ENCODE measurements at regions of chr17 and their contacts with region 1.

Region 1: GRCh38 chr17:75271233-75271954 is 363 bp upstream of the MIF4GD start:
- DNase-seq: peak; percentile 100
- H3K4me3 ChIP-seq: peak overlapping the region; percentile 74 to 79
- H3K27ac ChIP-seq: peak overlapping the region; percentile 51 to 97; a peak in 3 of 4 replicates
- H3K4me1 ChIP-seq: peaks cover 24 to 44% of the 10 kb centered on the region in 2 experiments; a peak in 3 of 4 replicates
- H3K27me3 ChIP-seq: no peaks in the 10 kb centered on the region
- CTCF ChIP-seq: peak; percentile 62
- EP300 ChIP-seq: no peak
- RAD21 ChIP-seq: peak; percentile 17; the same call in 1 of the 2 replicates

Region 2: DNA sequence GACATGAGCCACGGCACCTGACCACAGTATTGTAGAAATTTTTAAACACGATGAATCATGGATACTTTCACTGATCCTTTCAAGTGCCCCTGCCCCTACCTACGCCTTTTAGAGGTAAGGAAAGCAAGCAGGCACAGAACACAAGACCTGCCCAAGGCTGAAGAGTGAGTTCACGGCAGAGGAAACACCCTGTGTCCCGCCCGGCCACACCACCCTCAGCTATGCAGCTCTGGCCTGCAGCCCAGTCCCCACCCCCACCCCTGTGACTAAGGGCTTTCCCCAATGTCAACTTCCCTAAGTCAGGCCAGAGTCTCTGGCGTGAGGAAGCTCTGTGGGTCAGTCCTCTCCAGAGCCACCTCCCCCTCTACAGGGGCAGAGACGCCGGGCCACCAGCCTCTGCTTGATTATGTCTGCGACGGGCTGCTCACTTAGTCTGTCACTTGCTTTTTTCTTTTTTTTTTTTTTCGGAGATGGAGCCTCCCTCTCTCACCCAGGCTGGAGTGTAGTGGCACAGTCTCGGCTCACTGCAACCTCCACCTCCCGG is 175.2 kb before region 1 on chr17:
- CTCF ChIA-PET with region 1: no interaction called
- POLR2A ChIA-PET with region 1: no interaction called
- DNase-seq: no peak
- H3K4me3 ChIP-seq: no peak overlapping the region
- H3K27ac ChIP-seq: no peak overlapping the region
- H3K4me1 ChIP-seq: peaks cover 0 to 2% of the 10 kb centered on the region in 2 experiments; a peak in 1 of 4 replicates
- H3K27me3 ChIP-seq: no peaks in the 10 kb centered on the region
- CTCF ChIP-seq: no peak
- EP300 ChIP-seq: no peak; a peak in 1 of 4 replicates
- RAD21 ChIP-seq: no peak

Region 3: GRCh38 chr17:75131280-75132017 is 139.9 kb before region 1 on chr17 and contains the start of gene NT5C:
- CTCF ChIA-PET with region 1: interaction called, 11 read pairs
- POLR2A ChIA-PET with region 1: interaction called, 4 read pairs
- DNase-seq: peak; percentile 97
- H3K4me3 ChIP-seq: peak within 1 kb of the TSS; percentile 64 to 88
- H3K27ac ChIP-seq: peak within 1 kb of the TSS; percentile 78 to 90
- H3K4me1 ChIP-seq: peaks cover 5 to 16% of the 10 kb centered on the region in 2 experiments; a peak in 2 of 4 replicates
- H3K27me3 ChIP-seq: no peaks in the 10 kb centered on the region
- CTCF ChIP-seq: peak; percentile 74
- EP300 ChIP-seq: no peak
- RAD21 ChIP-seq: 0 out of 2 replicates have a peak, but pooled peaks have one; percentile 16
- polyA plus RNA-seq, gene NT5C: 111 and 114 TPM in 2 replicates

Region 4: DNA sequence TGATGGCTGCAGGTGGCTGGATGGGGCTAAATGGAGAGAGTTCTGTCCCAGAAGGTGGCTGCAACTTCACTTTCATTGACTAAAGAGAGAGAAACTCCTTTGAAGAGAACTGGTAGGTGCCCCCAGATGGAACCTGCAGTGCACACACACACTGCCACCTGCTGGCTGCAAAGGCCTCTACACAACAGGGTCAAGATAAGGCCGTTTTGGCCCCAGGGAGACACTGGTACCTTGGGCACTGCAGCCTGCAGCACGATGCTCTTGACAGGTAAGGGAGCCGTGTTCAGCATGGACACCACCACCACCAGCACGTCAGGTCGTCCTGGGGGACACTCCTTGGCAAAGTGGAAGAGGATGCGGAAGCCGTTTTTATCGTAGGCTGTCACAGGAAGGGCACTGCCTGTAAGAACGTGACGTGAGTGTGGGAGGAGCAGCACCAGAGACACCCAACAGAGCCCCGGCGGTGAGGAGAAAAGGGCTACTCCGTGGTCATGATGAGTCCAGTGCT is 32.7 kb before region 1 on chr17:
- CTCF ChIA-PET with region 1: interaction called, 27 read pairs
- POLR2A ChIA-PET with region 1: no interaction called
- DNase-seq: peak; percentile 90
- H3K4me3 ChIP-seq: no peak overlapping the region
- H3K27ac ChIP-seq: no peak overlapping the region
- H3K4me1 ChIP-seq: no peaks in the 10 kb centered on the region; a peak in 1 of 4 replicates
- H3K27me3 ChIP-seq: no peaks in the 10 kb centered on the region
- CTCF ChIP-seq: peak; percentile 98
- EP300 ChIP-seq: no peak
- RAD21 ChIP-seq: peak; percentile 54

Region 5: DNA sequence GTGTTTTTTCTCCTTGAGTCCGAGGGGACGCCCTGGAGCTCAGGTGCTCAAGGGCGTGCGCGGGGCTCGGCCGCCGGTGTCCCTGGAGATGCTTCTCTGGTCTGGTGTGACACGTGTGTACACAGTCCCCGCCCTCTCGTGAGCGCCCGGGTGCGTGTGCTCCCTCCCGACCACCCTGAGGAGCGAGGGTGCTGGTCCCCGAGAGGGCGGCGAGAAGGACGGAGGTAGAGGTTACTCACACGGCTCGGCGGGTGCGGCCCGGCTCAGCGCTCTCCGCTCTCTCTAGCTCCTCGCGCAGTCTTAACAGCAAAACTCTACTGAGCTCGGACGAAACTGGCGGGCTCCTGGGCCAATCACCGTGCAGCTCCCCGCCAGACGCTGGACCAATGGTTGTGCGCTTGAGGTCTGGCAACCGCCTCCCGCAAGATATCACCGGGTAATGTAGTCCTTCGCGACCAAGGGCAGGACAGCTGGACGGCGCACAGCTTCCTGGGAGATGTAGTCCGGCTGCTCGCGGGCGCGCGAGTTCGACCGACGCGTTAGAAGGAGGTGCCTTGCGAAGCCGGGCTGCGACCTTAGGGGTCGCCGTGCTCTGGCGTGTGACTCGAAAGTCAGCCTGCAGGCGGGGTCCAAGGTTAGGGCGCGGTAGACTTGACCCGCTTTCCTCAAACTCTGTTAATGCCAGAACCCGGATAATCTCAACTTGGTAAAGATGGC is 17.9 kb after region 1 on chr17 and contains the start of gene SLC25A19:
- CTCF ChIA-PET with region 1: interaction called, 98 read pairs
- POLR2A ChIA-PET with region 1: interaction called, 36 read pairs
- DNase-seq: peak; percentile 99
- H3K4me3 ChIP-seq: peak within 1 kb of the TSS; percentile 68 to 80
- H3K27ac ChIP-seq: peak within 1 kb of the TSS; percentile 73 to 80
- H3K4me1 ChIP-seq: peaks cover 4 to 5% of the 10 kb centered on the region in 2 experiments; a peak in 2 of 4 replicates
- H3K27me3 ChIP-seq: no peaks in the 10 kb centered on the region
- CTCF ChIP-seq: peak; percentile 26; the same call in 1 of the 2 replicates
- EP300 ChIP-seq: no peak
- RAD21 ChIP-seq: 0 out of 2 replicates have a peak, but pooled peaks have one; percentile 34
- polyA plus RNA-seq, gene SLC25A19: 11.7 and 13.2 TPM in 2 replicates

Region 6: GRCh38 chr17:75393523-75394331 is 122.3 kb after region 1 on chr17:
- CTCF ChIA-PET with region 1: interaction called, 38 read pairs
- POLR2A ChIA-PET with region 1: interaction called, 12 read pairs
- DNase-seq: peak; percentile 98
- H3K4me3 ChIP-seq: peak overlapping the region; percentile 80 to 99
- H3K27ac ChIP-seq: peak overlapping the region; percentile 71 to 95
- H3K4me1 ChIP-seq: peaks cover 12 to 21% of the 10 kb centered on the region in 2 experiments
- H3K27me3 ChIP-seq: no peaks in the 10 kb centered on the region
- CTCF ChIP-seq: peak; percentile 15; the same call in 1 of the 2 replicates
- EP300 ChIP-seq: peak in 1 of 2 experiments; percentile 45; a peak in 1 of 4 replicates
- RAD21 ChIP-seq: peak; percentile 11; the same call in 1 of the 2 replicates